ENCODE measurements at regions of chr5 and their contacts with region 1.

Region 1: DNA sequence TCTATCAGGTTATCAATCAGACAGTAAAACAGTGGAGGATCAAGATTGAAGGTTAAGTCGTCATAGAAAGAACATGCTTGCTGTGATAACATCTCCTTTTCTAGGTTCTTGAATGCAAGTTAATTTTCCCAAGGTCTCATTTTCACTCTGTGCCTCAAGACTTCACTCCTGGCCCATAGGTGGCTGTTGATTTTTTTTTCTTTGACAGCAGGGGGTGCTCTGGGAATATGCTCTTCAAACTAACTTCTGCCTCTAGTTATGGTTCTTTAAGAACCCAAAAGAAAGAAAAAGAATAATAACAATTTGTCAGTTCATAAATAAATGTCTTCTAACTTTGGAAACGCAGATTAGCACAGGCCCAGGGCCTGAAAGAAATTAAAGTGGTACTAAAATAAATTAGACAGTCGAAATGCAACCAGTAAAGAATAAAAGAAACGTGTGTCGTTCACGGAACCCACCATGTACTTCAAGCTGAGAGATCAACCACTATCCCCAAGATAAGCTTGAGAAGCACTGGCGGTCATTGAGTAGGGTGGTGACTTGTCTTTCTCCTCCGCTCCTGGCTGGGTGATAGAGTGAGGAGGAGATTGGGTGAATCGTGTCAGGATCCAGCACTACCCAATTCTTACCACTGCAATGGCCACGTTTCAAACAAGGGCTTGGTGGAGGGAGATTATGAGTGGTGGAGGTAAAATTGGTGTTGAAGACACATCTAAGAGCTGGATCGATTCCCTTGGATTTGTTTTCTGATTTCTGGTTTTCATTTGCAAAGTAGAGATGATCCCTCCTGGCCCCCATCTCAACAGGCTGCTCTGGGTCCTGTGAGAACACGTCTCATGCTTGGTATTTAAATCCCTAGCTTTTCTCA is 93.4 kb upstream of the IRX4 start:
- DNase-seq: peak; percentile 52
- H3K4me3 ChIP-seq: no peak overlapping the region
- H3K27ac ChIP-seq: peak overlapping the region; percentile 99
- H3K4me1 ChIP-seq: peaks cover 38% of the 10 kb centered on the region
- H3K27me3 ChIP-seq: no peaks in the 10 kb centered on the region
- CTCF ChIP-seq: peak; percentile 51 to 58

Region 2: GRCh38 chr5:1799602-1800471 is 176.3 kb before region 1 on chr5 and contains the start of gene MRPL36:
- CTCF ChIA-PET with region 1: no interaction called
- dilution Hi-C with region 1: loop called (anchors 5 kb)
- in situ Hi-C with region 1: no loop called
- intact Hi-C with region 1: loop called (anchors 5 kb)
- DNase-seq: peak; percentile 87
- H3K4me3 ChIP-seq: peak within 1 kb of the TSS; percentile 69 to 86 (median 74)
- H3K27ac ChIP-seq: peak within 1 kb of the TSS; percentile 59
- H3K4me1 ChIP-seq: peaks cover 20% of the 10 kb centered on the region
- H3K27me3 ChIP-seq: no peaks in the 10 kb centered on the region
- CTCF ChIP-seq: no peak
- total RNA-seq, gene MRPL36: 47.2 to 82.2 TPM

Region 3: GRCh38 chr5:1948663-1949652 is 27.2 kb before region 1 on chr5:
- CTCF ChIA-PET with region 1: no interaction called
- dilution Hi-C with region 1: no loop called
- in situ Hi-C with region 1: no loop called
- intact Hi-C with region 1: loop called (anchors 2 kb)
- DNase-seq: peak; percentile 99
- H3K4me3 ChIP-seq: peak overlapping the region; percentile 18 to 56 (median 28)
- H3K27ac ChIP-seq: peak overlapping the region; percentile 95
- H3K4me1 ChIP-seq: peaks cover 15% of the 10 kb centered on the region
- H3K27me3 ChIP-seq: no peaks in the 10 kb centered on the region
- CTCF ChIP-seq: no peak

Region 4: DNA sequence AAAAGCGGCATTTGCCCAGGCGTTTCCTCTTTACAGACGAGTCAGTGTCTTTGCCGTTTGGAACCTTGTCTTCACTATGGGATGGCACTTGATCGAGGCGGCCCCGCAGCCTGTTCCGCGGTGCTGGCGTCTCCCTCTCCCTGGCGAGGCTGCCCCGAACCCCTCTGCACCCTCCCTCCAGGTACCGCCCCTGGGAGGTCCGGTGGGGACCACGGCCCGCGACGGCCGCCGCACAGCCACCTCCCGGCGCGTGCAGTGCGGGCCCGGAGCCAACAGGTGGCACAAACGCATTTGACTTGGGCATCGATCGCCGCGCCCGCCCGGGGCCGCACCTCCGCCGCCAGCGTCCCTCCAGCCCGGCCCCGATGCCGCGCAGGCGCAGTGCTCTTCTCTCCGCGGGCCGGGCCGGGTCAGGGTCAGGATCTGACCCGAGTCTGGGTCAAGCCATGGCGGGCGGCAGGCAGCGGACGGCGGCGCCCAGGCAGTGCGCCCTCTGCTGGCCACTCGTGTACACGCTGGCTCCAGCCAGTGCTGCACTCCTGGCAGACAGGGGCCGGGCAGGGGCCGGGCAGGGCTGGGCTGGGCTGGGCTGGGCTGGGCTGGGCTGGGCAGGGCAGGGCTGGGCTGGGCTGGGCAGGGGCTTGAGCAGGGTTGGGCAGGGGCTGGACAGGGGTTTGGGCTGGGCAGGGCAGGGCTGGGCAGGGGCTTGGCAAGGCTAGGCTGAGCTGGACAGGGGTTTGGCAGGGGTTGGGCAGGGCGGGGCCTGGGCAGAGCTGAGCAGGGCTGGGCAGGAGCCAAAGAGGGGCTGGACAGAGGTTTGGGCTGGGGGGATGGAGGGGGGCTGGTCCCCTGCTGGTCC is 62.4 kb after region 1 on chr5:
- CTCF ChIA-PET with region 1: no interaction called
- dilution Hi-C with region 1: no loop called
- in situ Hi-C with region 1: no loop called
- intact Hi-C with region 1: loop called (anchors 2 kb)
- DNase-seq: peak; percentile 42
- H3K4me3 ChIP-seq: peak overlapping the region; percentile 53 to 58 (median 57)
- H3K27ac ChIP-seq: no peak overlapping the region
- H3K4me1 ChIP-seq: peaks cover 12% of the 10 kb centered on the region
- H3K27me3 ChIP-seq: no peaks in the 10 kb centered on the region
- CTCF ChIP-seq: peak; percentile 59 to 72

Region 5: DNA sequence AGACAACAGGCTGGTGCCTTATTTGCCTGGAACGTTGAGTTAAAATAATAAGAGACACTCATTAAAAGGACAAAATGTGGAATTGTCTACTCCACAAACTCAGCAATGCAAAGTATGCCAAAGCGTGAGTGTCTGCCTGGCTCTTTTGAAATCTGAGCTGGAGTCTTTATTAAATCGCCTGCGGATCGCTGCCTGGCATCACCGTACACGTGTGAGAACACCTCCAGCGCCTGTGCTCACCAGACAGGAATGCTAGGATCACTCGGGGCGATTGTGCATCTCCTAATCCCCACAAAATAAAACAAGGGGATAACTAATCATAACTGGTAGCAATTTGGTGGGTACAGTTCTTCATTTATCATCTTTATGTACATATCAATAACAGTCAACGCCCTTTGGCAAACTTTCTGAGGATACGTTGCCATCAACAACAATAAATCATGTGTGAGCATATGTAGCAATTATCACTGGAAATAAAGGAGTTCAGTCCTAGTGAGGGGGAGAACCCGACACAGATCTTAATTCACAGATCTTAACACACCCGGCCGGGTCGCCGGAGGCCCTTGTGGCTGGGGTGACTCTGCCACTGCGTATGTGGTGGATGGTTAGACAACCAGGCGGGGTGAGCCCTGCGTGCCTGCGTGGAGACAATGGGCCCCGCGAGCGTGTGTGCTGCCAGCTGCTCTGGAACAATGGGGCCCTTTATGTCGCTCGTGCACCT is 1334.6 kb after region 1 on chr5:
- CTCF ChIA-PET with region 1: no interaction called
- dilution Hi-C with region 1: loop called (anchors 25 kb)
- in situ Hi-C with region 1: no loop called
- intact Hi-C with region 1: no loop called
- DNase-seq: peak; percentile 99
- H3K4me3 ChIP-seq: no peak overlapping the region
- H3K27ac ChIP-seq: peak overlapping the region; percentile 98
- H3K4me1 ChIP-seq: peaks cover 25% of the 10 kb centered on the region
- H3K27me3 ChIP-seq: no peaks in the 10 kb centered on the region
- CTCF ChIP-seq: no peak

Measured in mammary epithelial cell (primary cell).